ENCODE measurements at regions of chr3 and their contacts with region 1.

Region 1: GRCh38 chr3:48439820-48440589 is at the starts of genes CCDC51 and TMA7:
- DNase-seq: peak; percentile 90
- H3K4me3 ChIP-seq: peak within 1 kb of the TSS; percentile 69 to 97 (median 90)
- H3K27ac ChIP-seq: peak within 1 kb of the TSS; percentile 94 to 98 (median 98)
- H3K4me1 ChIP-seq: peaks cover 19 to 46% (median 35%) of the 10 kb centered on the region in 3 donors
- H3K27me3 ChIP-seq: no peaks in the 10 kb centered on the region
- CTCF ChIP-seq: no peak
- POLR2A ChIP-seq: peak in 3 of 4 donors; percentile 93 to 97 (median 94)
- total RNA-seq, gene CCDC51: 15.1 to 31.3 (median 18.2) TPM
- total RNA-seq, gene TMA7: 293 to 431 (median 357) TPM

Region 2: DNA sequence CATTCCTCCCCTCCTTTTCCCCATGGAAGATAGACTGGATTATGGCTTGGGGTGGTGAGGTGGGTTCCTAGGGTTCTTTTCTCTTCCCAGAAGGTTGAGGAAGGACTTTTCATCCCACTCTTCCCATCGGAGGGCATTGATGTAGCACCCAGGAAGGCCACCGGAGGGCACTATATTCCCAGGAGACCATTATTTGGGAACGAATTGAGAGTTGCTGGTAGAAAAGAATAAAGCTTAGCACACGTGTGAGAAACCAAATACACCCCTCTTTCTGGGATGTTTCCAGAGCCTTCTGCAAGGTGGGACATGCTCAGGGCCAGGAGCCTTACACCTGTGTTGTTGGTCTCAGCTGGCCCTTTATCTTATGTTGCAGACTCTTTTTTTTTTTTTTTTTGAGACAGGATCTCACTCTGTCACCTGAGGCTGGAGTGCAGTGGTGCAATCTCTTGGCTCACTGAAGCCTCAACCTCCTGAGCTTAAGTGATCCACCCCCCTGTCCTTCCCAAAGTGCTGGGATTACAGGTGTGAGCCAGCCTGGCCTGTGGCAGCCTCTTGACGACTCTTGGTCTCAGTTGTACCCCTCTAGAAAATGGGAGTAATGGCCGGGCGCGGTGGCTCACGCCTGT is 245.4 kb before region 1 on chr3:
- intact Hi-C with region 1: loop called (anchors 5 kb)
- DNase-seq: no peak
- H3K4me3 ChIP-seq: no peak overlapping the region
- H3K27ac ChIP-seq: peak overlapping the region in 1 of 4 donors; percentile 4
- H3K4me1 ChIP-seq: peaks cover 0 to 15% (median 4%) of the 10 kb centered on the region in 3 donors
- H3K27me3 ChIP-seq: no peaks in the 10 kb centered on the region
- CTCF ChIP-seq: peak in 5 of 6 experiments; percentile 69 to 87 (median 79)
- POLR2A ChIP-seq: no peak

Region 3: DNA sequence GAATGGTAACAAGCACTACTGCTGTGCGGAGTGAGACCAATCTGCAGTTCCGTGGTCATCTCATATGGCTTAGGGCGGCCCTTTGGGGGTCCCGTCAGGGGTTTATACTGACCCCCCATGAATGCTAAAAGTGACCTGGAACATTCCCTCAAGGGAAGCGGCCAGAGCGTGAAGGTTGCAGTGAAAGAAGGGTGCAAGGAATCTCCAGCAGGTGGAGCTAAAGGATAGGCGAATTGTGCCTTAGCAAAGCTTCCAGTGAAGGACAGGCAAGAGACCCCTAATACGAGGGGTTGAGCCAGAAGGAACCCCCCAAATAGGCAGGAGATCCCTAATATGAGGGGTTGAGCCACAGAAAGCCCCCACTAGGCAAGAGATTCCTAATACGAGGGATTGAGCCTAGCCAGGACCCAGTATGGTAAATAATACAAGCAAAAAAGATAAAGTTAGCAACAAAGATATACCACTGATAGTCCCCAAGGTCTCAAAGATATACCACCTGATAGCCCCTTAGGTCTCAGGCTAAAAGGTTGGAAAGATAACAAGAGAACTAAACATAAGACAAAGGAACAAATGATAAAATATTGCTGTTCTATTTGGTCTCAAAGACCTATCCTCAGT is 166.3 kb before region 1 on chr3:
- intact Hi-C with region 1: loop called (anchors 2 kb)
- DNase-seq: no peak
- H3K4me3 ChIP-seq: no peak overlapping the region
- H3K27ac ChIP-seq: no peak overlapping the region
- H3K4me1 ChIP-seq: peaks cover 4 to 36% (median 9%) of the 10 kb centered on the region in 3 donors
- H3K27me3 ChIP-seq: no peaks in the 10 kb centered on the region
- CTCF ChIP-seq: peak; percentile 30 to 86 (median 75)
- POLR2A ChIP-seq: no peak

Region 4: GRCh38 chr3:48399387-48400172 is 40.4 kb before region 1 on chr3:
- intact Hi-C with region 1: loop called (anchors 2 kb)
- DNase-seq: no peak
- H3K4me3 ChIP-seq: no peak overlapping the region
- H3K27ac ChIP-seq: peak overlapping the region in 3 of 4 donors; percentile 0 to 86 (median 81)
- H3K4me1 ChIP-seq: peaks cover 13 to 57% (median 21%) of the 10 kb centered on the region in 3 donors
- H3K27me3 ChIP-seq: no peaks in the 10 kb centered on the region
- CTCF ChIP-seq: no peak
- POLR2A ChIP-seq: no peak

Measured in esophagus squamous epithelium (tissue), 5 donors.